Activated CD4-positive, alpha-beta memory T cell treated with anti-CD3 and anti-CD28 coated beads, Interleukin-2, amount 10 ng/mL, durations not matched to agents 7 days and 5 days (primary cell): ENCODE measurements at regions of chr15 and their contacts with region 1.

Region 1: DNA sequence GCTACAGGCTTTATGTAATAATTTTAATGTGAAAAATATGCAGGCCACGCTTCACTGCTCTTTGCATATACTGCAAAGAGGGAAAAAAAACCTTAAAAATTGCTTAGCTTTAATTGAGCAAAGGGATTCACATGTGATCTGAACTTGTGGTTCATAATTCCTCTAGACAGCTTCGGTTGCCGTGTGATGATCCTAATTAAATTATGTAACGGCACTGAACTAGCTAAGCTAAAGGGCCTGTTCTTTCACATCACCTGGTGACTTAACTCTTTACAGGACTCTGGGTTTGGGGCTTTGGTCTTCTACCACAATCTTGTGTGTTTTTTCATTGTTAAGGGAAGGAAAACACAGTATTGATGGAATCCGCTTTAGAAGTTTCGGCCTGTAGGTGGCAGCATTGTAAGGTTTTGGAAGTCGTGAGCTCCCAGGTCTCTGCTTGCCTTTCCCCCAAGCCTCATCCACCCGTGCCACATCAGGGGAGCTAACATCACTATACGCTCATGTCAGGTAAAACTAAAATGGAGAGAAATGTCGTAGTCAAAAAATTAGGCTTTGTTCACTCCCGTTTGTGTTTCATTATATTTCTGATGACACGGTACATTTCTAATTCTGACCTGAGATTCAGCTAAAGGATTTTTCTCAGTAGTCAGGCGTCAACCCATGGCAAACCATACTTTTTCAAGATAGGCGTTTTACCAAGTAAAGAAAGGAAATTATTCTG is 205.6 kb upstream of the DPH6 start:
- DNase-seq: peak; percentile 42
- H3K4me3 Mint-ChIP-seq: no peak overlapping the region
- H3K27ac Mint-ChIP-seq: no peak overlapping the region
- H3K4me1 Mint-ChIP-seq: no peaks in the 10 kb centered on the region
- H3K27me3 Mint-ChIP-seq: peaks cover 1% of the 10 kb centered on the region

Region 2: GRCh38 chr15:35740761-35741160 is 10.8 kb before region 1 on chr15:
- CTCF ChIA-PET with region 1: interaction called, 11 read pairs
- POLR2A ChIA-PET with region 1: no interaction called
- DNase-seq: no peak
- H3K4me3 Mint-ChIP-seq: no peak overlapping the region
- H3K27ac Mint-ChIP-seq: no peak overlapping the region
- H3K4me1 Mint-ChIP-seq: no peaks in the 10 kb centered on the region
- H3K27me3 Mint-ChIP-seq: peaks cover 2% of the 10 kb centered on the region